CD8-positive, alpha-beta T cell (primary cell): ENCODE measurements at regions of chr2 and their contacts with region 1.

Region 1: GRCh38 chr2:171160119-171160955 is at the start of gene TLK1:
- DNase-seq: peak; percentile 55 to 88 (median 78)
- ATAC-seq: peak; percentile 56
- H3K4me3 ChIP-seq: peak within 1 kb of the TSS; percentile 75 to 92
- H3K4me3 Mint-ChIP-seq: peak within 1 kb of the TSS; percentile 90
- H3K27ac ChIP-seq: peak within 1 kb of the TSS; percentile 74 to 89
- H3K27ac Mint-ChIP-seq: peak within 1 kb of the TSS; percentile 94
- H3K4me1 ChIP-seq: peaks cover 44% of the 10 kb centered on the region
- H3K4me1 Mint-ChIP-seq: peaks cover 60% of the 10 kb centered on the region
- H3K27me3 ChIP-seq: no peaks in the 10 kb centered on the region
- H3K27me3 Mint-ChIP-seq: no peaks in the 10 kb centered on the region
- CTCF ChIP-seq: no peak
- total RNA-seq, gene TLK1: 95.7 to 107 TPM

Region 2: GRCh38 chr2:171086352-171087290 is 73.7 kb before region 1 on chr2:
- CTCF ChIA-PET with region 1: interaction called, 16 read pairs
- POLR2A ChIA-PET with region 1: interaction called, 19 read pairs
- intact Hi-C with region 1: loop called (anchors 1 to 5 kb)
- DNase-seq: peak; percentile 27 to 78 (median 57)
- ATAC-seq: peak; percentile 72
- H3K4me3 ChIP-seq: peak overlapping the region; percentile 4 to 39
- H3K4me3 Mint-ChIP-seq: peak overlapping the region; percentile 80
- H3K27ac ChIP-seq: peak overlapping the region; percentile 7 to 39
- H3K27ac Mint-ChIP-seq: peak overlapping the region; percentile 95
- H3K4me1 ChIP-seq: peaks cover 57% of the 10 kb centered on the region
- H3K4me1 Mint-ChIP-seq: peaks cover 66% of the 10 kb centered on the region
- H3K27me3 ChIP-seq: no peaks in the 10 kb centered on the region
- H3K27me3 Mint-ChIP-seq: no peaks in the 10 kb centered on the region
- CTCF ChIP-seq: peak; percentile 80

Region 3: GRCh38 chr2:171109571-171109970 is 50.8 kb before region 1 on chr2:
- CTCF ChIA-PET with region 1: no interaction called
- POLR2A ChIA-PET with region 1: no interaction called
- intact Hi-C with region 1: no loop called
- DNase-seq: no peak
- ATAC-seq: no peak
- H3K4me3 ChIP-seq: no peak overlapping the region
- H3K4me3 Mint-ChIP-seq: no peak overlapping the region
- H3K27ac ChIP-seq: no peak overlapping the region
- H3K27ac Mint-ChIP-seq: peak overlapping the region; percentile 20
- H3K4me1 ChIP-seq: no peaks in the 10 kb centered on the region
- H3K4me1 Mint-ChIP-seq: peaks cover 52% of the 10 kb centered on the region
- H3K27me3 ChIP-seq: no peaks in the 10 kb centered on the region
- H3K27me3 Mint-ChIP-seq: no peaks in the 10 kb centered on the region
- CTCF ChIP-seq: no peak

Region 4: DNA sequence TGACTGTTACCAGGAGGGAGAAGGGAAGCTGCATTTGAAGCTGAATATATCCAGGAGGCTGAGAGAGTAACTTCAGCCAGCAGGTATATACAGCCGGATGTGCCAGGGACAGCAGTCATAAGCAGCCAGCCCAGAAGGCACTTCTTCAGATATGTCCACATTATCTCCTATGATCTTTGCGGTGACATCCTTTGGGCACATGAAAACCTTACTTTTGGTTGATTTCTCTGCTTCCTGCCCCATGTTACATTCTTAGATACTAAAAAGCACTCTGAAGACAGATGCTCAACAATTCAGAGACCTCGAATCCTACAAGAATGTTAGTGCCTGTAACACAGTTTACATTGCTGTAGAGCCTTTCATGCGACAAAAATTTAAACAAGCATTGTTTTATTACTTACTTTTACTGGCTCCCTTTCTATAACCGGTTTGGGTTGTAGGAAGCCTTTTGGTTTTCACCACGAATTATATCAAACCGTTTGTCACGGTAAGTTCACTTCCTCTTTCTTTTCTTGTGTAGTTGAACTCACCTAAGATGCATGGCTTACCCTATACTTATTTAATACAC is 50.6 kb after region 1 on chr2:
- CTCF ChIA-PET with region 1: no interaction called
- POLR2A ChIA-PET with region 1: no interaction called
- intact Hi-C with region 1: loop called in 1 of 2 experiments (anchors 2 kb)
- DNase-seq: peak in 8 of 9 experiments; percentile 16 to 65 (median 40)
- ATAC-seq: peak; percentile 93
- H3K4me3 ChIP-seq: peak overlapping the region; percentile 1 to 31
- H3K4me3 Mint-ChIP-seq: peak overlapping the region; percentile 65
- H3K27ac ChIP-seq: peak overlapping the region; percentile 13 to 67
- H3K27ac Mint-ChIP-seq: peak overlapping the region; percentile 75
- H3K4me1 ChIP-seq: peaks cover 13% of the 10 kb centered on the region
- H3K4me1 Mint-ChIP-seq: peaks cover 21% of the 10 kb centered on the region
- H3K27me3 ChIP-seq: no peaks in the 10 kb centered on the region
- H3K27me3 Mint-ChIP-seq: no peaks in the 10 kb centered on the region
- CTCF ChIP-seq: no peak

Region 5: GRCh38 chr2:171244970-171245782 is 84.8 kb after region 1 on chr2:
- CTCF ChIA-PET with region 1: interaction called, 4 read pairs
- POLR2A ChIA-PET with region 1: interaction called, 5 read pairs
- intact Hi-C with region 1: loop called in 1 of 2 experiments (anchors 2 kb)
- DNase-seq: peak in 2 of 9 experiments; percentile 18 to 23
- ATAC-seq: no peak
- H3K4me3 ChIP-seq: no peak overlapping the region
- H3K4me3 Mint-ChIP-seq: no peak overlapping the region
- H3K27ac ChIP-seq: no peak overlapping the region
- H3K27ac Mint-ChIP-seq: no peak overlapping the region
- H3K4me1 ChIP-seq: peaks cover 26% of the 10 kb centered on the region
- H3K4me1 Mint-ChIP-seq: peaks cover 35% of the 10 kb centered on the region
- H3K27me3 ChIP-seq: no peaks in the 10 kb centered on the region
- H3K27me3 Mint-ChIP-seq: no peaks in the 10 kb centered on the region
- CTCF ChIP-seq: no peak

Region 6: DNA sequence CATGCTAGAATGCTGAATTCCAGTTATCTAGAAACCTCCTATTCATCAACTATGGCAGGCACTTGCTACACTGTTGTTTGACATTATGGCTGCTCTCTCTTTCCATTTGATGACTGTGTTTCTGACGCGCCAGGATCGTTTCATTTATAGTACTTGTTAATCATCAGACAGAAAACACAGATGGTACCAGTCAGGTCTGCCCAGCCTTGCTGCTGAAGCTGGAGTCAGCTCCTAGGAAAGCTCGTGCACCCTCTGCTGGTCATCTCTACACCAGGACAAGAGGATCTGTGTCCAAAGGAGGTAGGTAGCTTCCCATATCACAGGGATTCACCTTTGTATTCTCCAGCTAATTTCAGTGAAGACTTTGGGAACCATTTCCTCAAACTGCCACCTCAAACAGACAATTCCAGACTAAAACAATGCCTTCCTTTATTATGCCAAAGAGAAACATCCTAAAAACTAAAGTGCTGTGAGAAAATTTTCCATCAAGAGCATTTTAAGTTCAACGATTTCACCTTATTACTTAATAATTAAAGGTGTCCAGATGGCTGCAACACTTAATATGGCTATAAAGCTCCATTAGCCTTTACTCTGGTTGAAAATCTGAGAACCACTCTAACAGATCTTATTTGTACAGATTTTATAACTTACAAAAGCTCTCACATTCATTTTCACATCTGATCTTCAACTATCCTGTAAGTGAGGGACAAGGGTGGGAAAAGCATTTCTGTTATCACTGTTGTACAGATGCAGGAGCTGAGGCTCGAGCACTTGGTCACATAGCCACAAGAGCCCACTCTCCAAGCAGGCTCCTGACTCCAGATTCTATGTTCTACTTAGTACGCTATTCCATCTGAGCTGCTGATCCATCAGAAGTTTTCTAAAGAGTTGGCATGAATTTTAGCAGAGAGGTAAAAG is 255.9 kb after region 1 on chr2:
- CTCF ChIA-PET with region 1: interaction called, 13 read pairs
- POLR2A ChIA-PET with region 1: interaction called, 3 read pairs
- intact Hi-C with region 1: loop called (anchors 1 to 5 kb)
- DNase-seq: peak; percentile 44 to 85 (median 79)
- ATAC-seq: peak; percentile 98
- H3K4me3 ChIP-seq: no peak overlapping the region
- H3K4me3 Mint-ChIP-seq: no peak overlapping the region
- H3K27ac ChIP-seq: no peak overlapping the region
- H3K27ac Mint-ChIP-seq: peak overlapping the region; percentile 1
- H3K4me1 ChIP-seq: no peaks in the 10 kb centered on the region
- H3K4me1 Mint-ChIP-seq: peaks cover 10% of the 10 kb centered on the region
- H3K27me3 ChIP-seq: no peaks in the 10 kb centered on the region
- H3K27me3 Mint-ChIP-seq: no peaks in the 10 kb centered on the region
- CTCF ChIP-seq: peak; percentile 65